A549 (cell line): ENCODE measurements at regions of chr2 and their contacts with region 1.

Region 1: DNA sequence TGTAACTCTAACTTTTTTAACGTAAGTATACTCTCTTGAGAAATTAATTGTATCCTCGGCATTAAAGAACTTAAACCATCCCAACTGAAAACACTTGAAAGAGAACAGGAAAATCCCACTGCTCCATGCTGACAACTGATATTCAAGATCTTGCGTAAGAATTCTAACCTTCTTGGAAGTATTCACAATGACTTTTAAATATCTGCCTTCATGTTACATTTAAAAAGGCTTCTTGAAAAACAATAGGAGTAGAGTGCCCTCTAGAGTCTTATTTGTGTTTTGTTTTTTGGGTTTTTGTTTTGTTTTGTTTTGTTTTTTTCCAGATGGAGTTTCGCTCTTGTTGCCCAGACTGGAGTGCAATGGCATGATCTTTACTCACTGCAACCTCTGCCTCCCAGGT is 65.4 kb upstream of the DNAJC10 start:
- DNase-seq: peak; percentile 3 to 53
- ATAC-seq: peak in 1 of 2 experiments; percentile 48; a peak in 3 of 6 replicates
- H3K4me3 ChIP-seq: no peak overlapping the region
- H3K27ac ChIP-seq: 0 out of 6 replicates have a peak overlapping the region, but pooled peaks of 1 of the 2 experiments have one; percentile 58
- H3K4me1 ChIP-seq: no peaks in the 10 kb centered on the region
- CTCF ChIP-seq: peak; percentile 78
- EP300 ChIP-seq: no peak
- POLR2A ChIP-seq: no peak
- RAD21 ChIP-seq: peak; percentile 73 to 85

Region 2: DNA sequence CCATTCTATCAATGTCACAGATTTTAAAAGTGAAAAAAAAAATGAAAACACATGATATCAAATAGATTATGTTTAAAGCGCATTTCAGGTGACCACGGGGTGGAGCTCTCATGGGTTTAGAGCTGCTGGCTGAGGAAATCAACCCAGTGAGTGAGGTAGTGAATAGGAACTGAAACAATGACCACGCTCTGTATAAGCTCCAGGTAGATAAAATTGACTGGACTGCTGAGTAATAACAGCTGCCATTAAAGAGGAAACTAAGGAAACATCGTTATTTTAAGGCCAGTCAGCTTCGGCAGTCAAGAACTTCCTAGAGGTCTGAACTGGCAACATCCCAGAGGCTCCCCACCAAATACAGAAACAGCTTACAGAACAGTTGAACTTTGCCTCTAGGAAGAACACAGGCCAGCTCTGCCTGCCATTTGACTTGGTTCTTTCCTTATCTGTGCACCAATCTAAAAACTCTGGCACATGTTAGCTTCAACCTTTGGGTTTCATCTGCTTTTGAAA is 409.8 kb before region 1 on chr2:
- CTCF ChIA-PET with region 1: interaction called, 14 read pairs
- POLR2A ChIA-PET with region 1: no interaction called
- DNase-seq: peak; percentile 5 to 43
- ATAC-seq: peak; percentile 64 to 84; a peak in 3 of 6 replicates
- H3K4me3 ChIP-seq: no peak overlapping the region
- H3K27ac ChIP-seq: peak overlapping the region in 1 of 2 experiments; percentile 48; a peak in 2 of 6 replicates
- H3K4me1 ChIP-seq: 0 out of 3 replicates have a peak, but pooled peaks cover 2% of the 10 kb centered on the region
- CTCF ChIP-seq: peak; percentile 53
- EP300 ChIP-seq: no peak
- POLR2A ChIP-seq: no peak
- RAD21 ChIP-seq: peak; percentile 55 to 57

Region 3: DNA sequence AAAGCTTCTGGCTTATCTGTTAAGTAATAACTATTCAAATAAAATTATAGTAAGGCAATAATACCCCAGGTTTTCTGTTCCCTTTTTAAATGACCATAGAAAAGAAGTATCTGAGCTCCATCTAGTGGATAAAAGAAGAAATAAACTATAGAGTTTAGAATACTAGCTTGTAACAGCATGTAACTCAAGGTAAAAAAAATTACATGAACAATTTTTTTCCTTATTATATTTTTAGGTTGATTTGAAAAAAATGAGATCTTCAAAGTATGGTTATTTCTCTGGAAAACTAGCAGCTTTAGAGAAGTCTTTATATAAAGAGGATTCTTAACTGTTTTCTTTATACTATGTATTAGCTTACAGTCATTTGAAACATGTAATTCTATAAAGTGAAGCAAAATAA is 329.4 kb after region 1 on chr2:
- CTCF ChIA-PET with region 1: no interaction called
- POLR2A ChIA-PET with region 1: no interaction called
- DNase-seq: peak; percentile 33 to 36
- ATAC-seq: peak; percentile 76 to 85; a peak in 5 of 6 replicates
- H3K4me3 ChIP-seq: no peak overlapping the region
- H3K27ac ChIP-seq: no peak overlapping the region
- H3K4me1 ChIP-seq: peaks cover 9% of the 10 kb centered on the region; the same call in 2 of the 3 replicates
- CTCF ChIP-seq: peak; percentile 55; the same call in 2 of the 3 replicates
- EP300 ChIP-seq: no peak
- POLR2A ChIP-seq: no peak
- RAD21 ChIP-seq: peak; percentile 65 to 72